HCT116 (cell line): ENCODE measurements at regions of chr1 and their contacts with region 1.

Region 1: GRCh38 chr1:3453203-3453761 is 1.2 kb upstream of the ARHGEF16 start:
- DNase-seq: peak; percentile 68
- ATAC-seq: peak; percentile 65
- H3K4me3 ChIP-seq: peak overlapping the region in 1 of 2 experiments; percentile 46; a peak in 1 of 4 replicates
- H3K27ac ChIP-seq: peak overlapping the region; percentile 80
- H3K4me1 ChIP-seq: peaks cover 14 to 27% of the 10 kb centered on the region in 2 experiments
- H3K27me3 ChIP-seq: no peaks in the 10 kb centered on the region
- CTCF ChIP-seq: peak in 2 of 3 experiments; percentile 93 to 94; a peak in 4 of 6 replicates
- POLR2A ChIP-seq: no peak
- RAD21 ChIP-seq: no peak

Region 2: GRCh38 chr1:3403388-3404231 is 49.7 kb before region 1 on chr1:
- CTCF ChIA-PET with region 1: no interaction called
- POLR2A ChIA-PET with region 1: no interaction called
- RAD21 ChIA-PET with region 1: no interaction called
- intact Hi-C with region 1: no loop called
- DNase-seq: no peak
- ATAC-seq: peak; percentile 71
- H3K4me3 ChIP-seq: no peak overlapping the region
- H3K27ac ChIP-seq: no peak overlapping the region
- H3K4me1 ChIP-seq: no peaks in the 10 kb centered on the region
- H3K27me3 ChIP-seq: no peaks in the 10 kb centered on the region
- CTCF ChIP-seq: peak in 2 of 3 experiments; percentile 33 to 38; a peak in 4 of 6 replicates
- POLR2A ChIP-seq: no peak
- RAD21 ChIP-seq: no peak

Region 3: DNA sequence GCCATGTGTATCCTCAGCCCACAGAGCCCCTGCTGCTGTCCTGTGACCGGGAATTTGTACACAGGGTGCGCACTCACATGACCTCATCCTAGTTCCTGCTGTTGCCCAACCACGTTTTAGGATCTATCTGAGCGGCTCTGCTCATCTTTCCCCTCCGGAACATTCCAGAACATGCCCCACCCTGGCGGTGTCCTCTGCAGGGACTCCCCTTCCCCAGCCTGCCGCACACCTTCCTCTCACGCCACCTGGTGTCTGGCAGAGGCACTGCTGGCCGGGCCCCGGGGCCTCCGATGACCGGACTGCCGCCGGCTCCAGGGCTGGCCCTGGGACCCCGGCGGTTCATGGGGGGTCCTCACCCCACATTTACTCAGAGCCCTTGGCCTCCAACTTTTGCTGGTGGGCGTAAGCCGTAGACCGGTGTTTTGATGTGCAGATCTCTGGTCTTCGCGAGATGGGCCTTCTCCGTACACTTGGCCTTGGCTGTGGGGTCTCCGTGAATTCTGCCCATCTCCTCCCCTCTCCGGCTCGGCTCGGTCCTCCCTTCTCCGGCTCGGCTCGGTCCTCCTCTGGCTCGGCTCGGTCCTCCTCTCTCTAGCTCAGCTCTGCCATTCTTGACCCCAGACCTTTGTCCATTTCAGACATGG is 30.6 kb after region 1 on chr1:
- CTCF ChIA-PET with region 1: interaction called, 29 read pairs
- POLR2A ChIA-PET with region 1: interaction called, 4 read pairs
- RAD21 ChIA-PET with region 1: interaction called in 1 of 2 experiments, 5 read pairs
- intact Hi-C with region 1: loop called (anchors 1 kb)
- DNase-seq: no peak
- ATAC-seq: peak; percentile 62
- H3K4me3 ChIP-seq: no peak overlapping the region
- H3K27ac ChIP-seq: no peak overlapping the region
- H3K4me1 ChIP-seq: peaks cover 12 to 29% of the 10 kb centered on the region in 2 experiments; a peak in 3 of 4 replicates
- H3K27me3 ChIP-seq: no peaks in the 10 kb centered on the region
- CTCF ChIP-seq: peak; percentile 70 to 98 (median 88)
- POLR2A ChIP-seq: no peak
- RAD21 ChIP-seq: peak; percentile 74

Region 4: GRCh38 chr1:3618881-3619671 is 165.8 kb after region 1 on chr1:
- CTCF ChIA-PET with region 1: interaction called, 136 read pairs
- POLR2A ChIA-PET with region 1: interaction called, 6 read pairs
- RAD21 ChIA-PET with region 1: interaction called, 9 to 10 read pairs
- intact Hi-C with region 1: loop called (anchors 1 kb)
- DNase-seq: peak; percentile 53
- ATAC-seq: peak; percentile 81
- H3K4me3 ChIP-seq: no peak overlapping the region
- H3K27ac ChIP-seq: no peak overlapping the region
- H3K4me1 ChIP-seq: peaks cover 19 to 39% of the 10 kb centered on the region in 2 experiments
- H3K27me3 ChIP-seq: no peaks in the 10 kb centered on the region
- CTCF ChIP-seq: peak in 2 of 3 experiments; percentile 81 to 86; a peak in 4 of 6 replicates
- POLR2A ChIP-seq: no peak
- RAD21 ChIP-seq: no peak

Region 5: DNA sequence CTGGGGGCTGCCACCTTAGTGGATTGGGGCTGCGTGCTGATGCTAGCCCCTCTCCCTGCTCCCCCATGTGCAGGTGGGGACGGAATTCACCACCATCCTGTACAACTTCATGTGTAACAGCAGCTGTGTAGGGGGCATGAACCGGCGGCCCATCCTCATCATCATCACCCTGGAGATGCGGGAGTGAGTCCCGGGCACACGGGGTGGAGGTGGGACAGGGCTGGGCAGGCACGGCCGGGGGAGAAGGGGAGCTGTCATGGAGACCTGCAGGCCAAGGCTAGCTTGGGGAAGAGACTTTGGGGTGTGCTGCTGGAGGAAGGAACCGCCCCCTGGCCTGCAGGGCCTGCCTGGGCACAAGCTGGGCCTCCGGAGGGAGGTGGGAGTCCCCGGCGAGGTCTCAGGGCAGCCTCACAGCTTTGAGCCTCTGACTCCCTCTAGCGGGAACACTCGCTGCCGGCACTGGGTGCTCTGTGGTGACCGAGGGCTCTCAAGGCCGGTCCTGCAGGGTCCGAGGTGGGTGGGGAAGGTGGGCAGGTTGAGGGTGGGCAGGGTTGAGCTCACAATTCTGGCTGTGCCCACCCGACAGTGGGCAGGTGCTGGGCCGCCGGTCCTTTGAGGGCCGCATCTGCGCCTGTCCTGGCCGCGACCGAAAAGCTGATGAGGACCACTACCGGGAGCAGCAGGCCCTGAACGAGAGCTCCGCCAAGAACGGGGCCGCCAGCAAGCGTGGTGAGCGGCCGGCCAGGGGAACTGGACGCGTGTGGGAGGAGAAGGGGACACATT is 274.0 kb after region 1 on chr1:
- CTCF ChIA-PET with region 1: interaction called, 23 read pairs
- POLR2A ChIA-PET with region 1: interaction called, 3 read pairs
- RAD21 ChIA-PET with region 1: interaction called in 1 of 2 experiments, 3 read pairs
- intact Hi-C with region 1: loop called (anchors 5 kb)
- DNase-seq: no peak
- ATAC-seq: no peak
- H3K4me3 ChIP-seq: no peak overlapping the region
- H3K27ac ChIP-seq: no peak overlapping the region
- H3K4me1 ChIP-seq: no peaks in the 10 kb centered on the region
- H3K27me3 ChIP-seq: no peaks in the 10 kb centered on the region
- CTCF ChIP-seq: no peak
- POLR2A ChIP-seq: no peak
- RAD21 ChIP-seq: no peak

Region 6: GRCh38 chr1:3856908-3857790 is 403.9 kb after region 1 on chr1 and contains the starts of genes CEP104 and DFFB:
- CTCF ChIA-PET with region 1: no interaction called
- POLR2A ChIA-PET with region 1: no interaction called
- RAD21 ChIA-PET with region 1: no interaction called
- intact Hi-C with region 1: loop called (anchors 5 kb)
- DNase-seq: peak; percentile 97
- ATAC-seq: peak; percentile 96
- H3K4me3 ChIP-seq: peak within 1 kb of the TSS; percentile 70 to 93
- H3K27ac ChIP-seq: peak within 1 kb of the TSS; percentile 53
- H3K4me1 ChIP-seq: peaks cover 9 to 19% of the 10 kb centered on the region in 2 experiments; a peak in 3 of 4 replicates
- H3K27me3 ChIP-seq: no peaks in the 10 kb centered on the region
- CTCF ChIP-seq: peak; percentile 26 to 44 (median 28); a peak in 5 of 6 replicates
- POLR2A ChIP-seq: no peak
- RAD21 ChIP-seq: peak; percentile 71
- total RNA-seq, gene CEP104: 44.1 TPM
- total RNA-seq, gene DFFB: 9.0 TPM